CD8-positive, alpha-beta T cell (primary cell): ENCODE measurements at regions of chr17 and their contacts with region 1.

Region 1: DNA sequence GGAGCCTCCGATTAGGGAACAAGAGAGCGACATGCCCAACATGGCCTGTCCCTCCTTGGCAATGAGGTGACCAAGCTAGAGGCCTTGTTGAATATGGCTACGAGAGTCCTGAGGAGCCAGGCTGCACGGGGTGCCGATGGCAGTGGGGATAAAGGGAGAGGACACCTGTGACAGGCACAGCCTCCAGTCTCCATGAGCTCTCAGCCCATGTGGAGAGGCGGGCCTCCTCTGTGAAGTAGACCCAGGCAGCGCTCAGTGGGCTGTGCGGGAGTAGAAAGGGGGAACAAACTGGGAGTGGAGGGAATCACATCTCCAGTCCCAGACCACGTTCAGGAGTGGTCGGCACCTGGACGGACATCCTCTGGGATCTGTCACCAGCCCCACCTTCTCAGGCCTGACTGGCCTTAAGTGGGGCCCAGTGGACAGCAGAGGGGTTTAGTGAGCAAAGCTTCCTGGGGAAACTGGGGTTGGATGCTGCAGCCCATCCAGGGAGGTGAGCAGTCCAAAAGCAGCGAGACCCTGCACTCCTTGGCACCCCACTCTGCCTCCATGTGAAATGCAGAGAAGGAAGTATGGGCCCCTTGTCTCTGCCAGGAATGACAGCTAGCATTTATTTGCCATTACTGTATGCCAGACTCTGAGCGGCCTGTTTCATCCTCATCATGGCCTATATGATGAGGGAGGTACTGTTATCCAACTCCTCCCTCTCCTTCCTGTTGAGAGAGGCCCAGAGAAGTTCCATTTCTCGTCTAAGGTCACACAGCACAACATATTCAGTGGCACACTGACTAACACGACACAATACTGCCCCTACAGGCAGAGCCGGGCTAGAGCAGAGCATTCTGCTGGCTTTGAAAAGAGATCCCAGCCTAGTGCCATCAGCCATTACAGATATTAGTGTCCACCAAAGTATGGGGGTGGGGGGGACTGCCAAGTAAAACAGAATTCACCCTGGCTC is 4.5 kb upstream of the TMEM92 start:
- DNase-seq: peak; percentile 17 to 67 (median 53)
- ATAC-seq: peak; percentile 83
- H3K4me3 ChIP-seq: no peak overlapping the region
- H3K4me3 Mint-ChIP-seq: no peak overlapping the region
- H3K27ac ChIP-seq: no peak overlapping the region
- H3K27ac Mint-ChIP-seq: no peak overlapping the region
- H3K4me1 ChIP-seq: peaks cover 6% of the 10 kb centered on the region
- H3K4me1 Mint-ChIP-seq: peaks cover 5% of the 10 kb centered on the region
- H3K27me3 ChIP-seq: peaks cover 3 to 18% of the 10 kb centered on the region in 2 experiments
- H3K27me3 Mint-ChIP-seq: peaks cover 19% of the 10 kb centered on the region
- CTCF ChIP-seq: peak; percentile 73

Region 2: GRCh38 chr17:50169121-50169764 is 100.5 kb before region 1 on chr17:
- CTCF ChIA-PET with region 1: interaction called, 12 read pairs
- POLR2A ChIA-PET with region 1: interaction called, 3 read pairs
- intact Hi-C with region 1: loop called in 1 of 2 experiments (anchors 1 kb)
- DNase-seq: peak; percentile 37 to 83 (median 70)
- ATAC-seq: peak; percentile 86
- H3K4me3 ChIP-seq: peak overlapping the region; percentile 28 to 32
- H3K4me3 Mint-ChIP-seq: peak overlapping the region; percentile 75
- H3K27ac ChIP-seq: peak overlapping the region; percentile 17 to 28
- H3K27ac Mint-ChIP-seq: peak overlapping the region; percentile 90
- H3K4me1 ChIP-seq: peaks cover 20% of the 10 kb centered on the region
- H3K4me1 Mint-ChIP-seq: peaks cover 10% of the 10 kb centered on the region
- H3K27me3 ChIP-seq: no peaks in the 10 kb centered on the region
- H3K27me3 Mint-ChIP-seq: peaks cover 3% of the 10 kb centered on the region
- CTCF ChIP-seq: peak; percentile 55

Region 3: DNA sequence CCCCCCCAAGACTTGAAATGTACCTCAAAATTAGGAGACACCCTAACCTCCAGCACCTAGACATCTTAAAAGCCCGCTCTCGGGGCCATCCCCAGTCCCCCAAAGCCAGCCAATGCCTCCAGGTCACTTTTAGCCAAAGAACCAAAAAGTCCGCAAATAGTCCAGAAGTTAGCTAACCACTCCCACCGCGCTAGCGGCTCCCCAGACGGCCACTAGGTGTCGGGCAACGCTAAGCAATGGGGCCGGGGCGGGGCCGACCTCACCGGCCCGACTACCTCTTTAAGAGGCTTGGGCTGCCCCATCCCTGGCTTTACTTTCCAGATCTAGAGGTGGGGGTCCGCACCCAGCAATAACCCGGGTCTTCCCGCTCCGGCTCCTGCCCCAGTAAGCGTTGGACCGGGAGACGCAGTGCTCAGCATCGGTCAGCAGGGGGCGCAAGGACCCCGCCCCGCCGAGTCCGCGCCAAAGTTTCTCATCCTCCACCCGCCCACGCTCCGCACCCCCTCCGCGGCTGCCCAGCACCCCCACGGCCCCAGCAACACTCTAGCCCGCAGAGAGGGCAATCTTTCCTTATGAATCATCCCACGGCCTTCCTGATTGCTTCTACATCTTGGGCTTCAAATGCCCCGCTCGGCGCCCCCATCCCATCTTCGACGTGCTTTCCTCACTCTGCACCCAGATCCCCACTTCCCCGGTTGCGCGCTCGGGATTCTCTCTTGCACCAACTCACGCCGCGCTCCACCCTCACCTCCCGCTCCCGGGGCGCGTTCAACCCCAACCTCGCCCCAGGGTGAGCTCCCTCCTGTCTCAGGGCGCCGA is 69.1 kb before region 1 on chr17:
- CTCF ChIA-PET with region 1: interaction called, 47 read pairs
- POLR2A ChIA-PET with region 1: interaction called, 3 read pairs
- intact Hi-C with region 1: loop called in 1 of 2 experiments (anchors 1 kb)
- DNase-seq: peak; percentile 66 to 87 (median 80)
- ATAC-seq: peak; percentile 49
- H3K4me3 ChIP-seq: peak overlapping the region; percentile 47 to 49
- H3K4me3 Mint-ChIP-seq: peak overlapping the region; percentile 78
- H3K27ac ChIP-seq: no peak overlapping the region
- H3K27ac Mint-ChIP-seq: peak overlapping the region; percentile 11
- H3K4me1 ChIP-seq: peaks cover 21% of the 10 kb centered on the region
- H3K4me1 Mint-ChIP-seq: peaks cover 25% of the 10 kb centered on the region
- H3K27me3 ChIP-seq: peaks cover 12 to 20% of the 10 kb centered on the region in 2 experiments
- H3K27me3 Mint-ChIP-seq: peaks cover 42% of the 10 kb centered on the region
- CTCF ChIP-seq: peak; percentile 100

Region 4: DNA sequence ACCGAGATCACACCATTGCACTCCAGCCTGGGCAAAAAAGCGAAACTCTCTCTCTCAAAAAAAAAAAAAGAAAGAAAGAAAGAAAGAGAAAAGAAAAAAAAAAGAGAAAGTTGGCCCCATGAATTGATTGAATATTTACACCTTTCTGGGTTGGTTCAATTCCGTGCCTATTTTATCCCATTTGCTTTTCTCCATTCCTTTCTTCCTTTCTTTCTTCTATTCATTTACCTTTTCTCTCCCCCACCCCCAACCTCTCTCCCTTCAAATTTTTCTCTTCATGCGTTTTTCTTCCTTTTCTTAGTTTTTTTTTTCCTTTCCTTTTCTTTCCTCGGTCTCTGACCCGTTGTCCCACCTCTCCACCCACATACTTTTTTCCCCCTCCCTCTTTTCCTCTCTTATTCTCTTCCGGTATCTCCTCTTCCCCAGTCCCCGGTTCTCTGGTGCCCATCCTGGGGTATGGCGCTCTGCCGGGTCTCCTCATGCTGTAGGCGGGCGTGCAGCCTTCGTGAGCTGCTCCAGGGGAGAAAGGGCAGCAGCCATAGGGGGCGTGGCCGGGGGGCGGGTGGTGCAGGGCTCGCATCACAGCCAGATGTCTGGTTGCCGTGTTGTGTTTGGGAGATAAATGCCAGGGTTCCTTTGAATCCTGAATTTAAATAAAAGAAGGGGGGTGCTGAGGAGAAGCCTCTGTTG is 63.0 kb before region 1 on chr17:
- CTCF ChIA-PET with region 1: interaction called, 47 read pairs
- POLR2A ChIA-PET with region 1: no interaction called
- intact Hi-C with region 1: no loop called
- DNase-seq: peak in 3 of 9 experiments; percentile 25 to 44 (median 27)
- ATAC-seq: peak; percentile 40
- H3K4me3 ChIP-seq: no peak overlapping the region
- H3K4me3 Mint-ChIP-seq: no peak overlapping the region
- H3K27ac ChIP-seq: no peak overlapping the region
- H3K27ac Mint-ChIP-seq: no peak overlapping the region
- H3K4me1 ChIP-seq: peaks cover 4% of the 10 kb centered on the region
- H3K4me1 Mint-ChIP-seq: peaks cover 5% of the 10 kb centered on the region
- H3K27me3 ChIP-seq: peaks cover 5 to 13% of the 10 kb centered on the region in 2 experiments
- H3K27me3 Mint-ChIP-seq: peaks cover 58% of the 10 kb centered on the region
- CTCF ChIP-seq: no peak